Calu3 (cell line): ENCODE measurements at regions of chr5 and their contacts with region 1.

Region 1: DNA sequence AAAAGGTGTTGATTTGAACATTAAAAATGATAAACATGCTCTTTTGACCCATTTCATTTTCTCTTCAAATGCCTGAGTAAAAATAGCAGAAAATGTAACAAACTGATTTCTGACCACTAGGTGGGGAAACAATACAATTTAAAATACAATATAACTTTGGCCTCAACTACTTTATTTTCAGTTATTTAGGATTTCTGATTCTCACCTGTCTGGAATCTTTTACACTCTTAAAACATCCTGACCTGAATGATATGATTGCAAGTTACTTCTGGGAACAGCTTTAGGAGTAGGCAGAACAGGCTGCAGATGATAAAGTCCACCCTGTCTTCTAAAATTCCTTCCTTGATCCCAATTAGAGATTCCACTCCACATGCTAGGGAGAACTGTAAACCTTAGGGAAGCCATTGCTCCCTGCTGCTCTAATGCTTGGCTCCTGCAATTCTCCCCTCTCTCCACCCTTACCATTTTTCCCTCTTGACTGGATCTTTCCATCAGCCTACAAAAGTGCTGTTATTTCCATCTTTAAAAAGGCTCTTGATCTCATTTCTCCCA is 70.3 kb downstream of the FYB1 start:
- DNase-seq: no peak
- H3K4me3 Mint-ChIP-seq: no peak overlapping the region
- H3K27ac Mint-ChIP-seq: peak overlapping the region; percentile 76
- H3K4me1 Mint-ChIP-seq: peaks cover 12% of the 10 kb centered on the region
- H3K27me3 Mint-ChIP-seq: no peaks in the 10 kb centered on the region
- CTCF ChIP-seq: no peak

Region 2: GRCh38 chr5:39194466-39195136 is 45.5 kb after region 1 on chr5:
- CTCF ChIA-PET with region 1: no interaction called
- intact Hi-C with region 1: loop called (anchors 5 kb)
- DNase-seq: no peak
- H3K4me3 Mint-ChIP-seq: no peak overlapping the region
- H3K27ac Mint-ChIP-seq: no peak overlapping the region
- H3K4me1 Mint-ChIP-seq: peaks cover 59% of the 10 kb centered on the region
- H3K27me3 Mint-ChIP-seq: no peaks in the 10 kb centered on the region
- CTCF ChIP-seq: no peak

Region 3: DNA sequence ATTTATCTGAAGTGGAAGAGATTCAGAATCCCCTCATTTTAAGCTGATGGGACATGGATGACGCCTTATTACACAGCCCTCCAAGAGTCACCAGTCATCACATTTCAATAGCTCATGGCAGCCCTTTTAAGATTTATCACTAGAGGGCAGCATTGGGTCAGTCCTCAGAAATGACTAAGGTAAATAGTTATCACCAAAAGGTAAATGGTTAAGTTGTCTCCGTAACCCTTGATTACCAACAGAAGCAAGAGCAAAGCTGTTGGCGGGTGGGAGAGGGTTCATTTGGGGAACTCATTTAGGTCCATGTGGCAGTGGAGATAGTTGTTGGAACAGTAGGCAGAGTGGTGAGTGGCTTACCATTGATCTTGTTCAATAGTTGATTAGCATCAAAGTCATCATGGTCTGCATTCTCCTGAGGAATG is 227.2 kb after region 1 on chr5:
- CTCF ChIA-PET with region 1: interaction called, 6 read pairs
- intact Hi-C with region 1: loop called (anchors 2 kb)
- DNase-seq: peak; percentile 64
- H3K4me3 Mint-ChIP-seq: no peak overlapping the region
- H3K27ac Mint-ChIP-seq: no peak overlapping the region
- H3K4me1 Mint-ChIP-seq: peaks cover 39% of the 10 kb centered on the region
- H3K27me3 Mint-ChIP-seq: no peaks in the 10 kb centered on the region
- CTCF ChIP-seq: peak; percentile 73

Region 4: GRCh38 chr5:39547553-39548154 is 398.6 kb after region 1 on chr5:
- CTCF ChIA-PET with region 1: no interaction called
- intact Hi-C with region 1: loop called (anchors 10 kb)
- DNase-seq: peak; percentile 49
- H3K4me3 Mint-ChIP-seq: no peak overlapping the region
- H3K27ac Mint-ChIP-seq: no peak overlapping the region
- H3K4me1 Mint-ChIP-seq: peaks cover 10% of the 10 kb centered on the region
- H3K27me3 Mint-ChIP-seq: no peaks in the 10 kb centered on the region
- CTCF ChIP-seq: peak; percentile 59

Region 5: DNA sequence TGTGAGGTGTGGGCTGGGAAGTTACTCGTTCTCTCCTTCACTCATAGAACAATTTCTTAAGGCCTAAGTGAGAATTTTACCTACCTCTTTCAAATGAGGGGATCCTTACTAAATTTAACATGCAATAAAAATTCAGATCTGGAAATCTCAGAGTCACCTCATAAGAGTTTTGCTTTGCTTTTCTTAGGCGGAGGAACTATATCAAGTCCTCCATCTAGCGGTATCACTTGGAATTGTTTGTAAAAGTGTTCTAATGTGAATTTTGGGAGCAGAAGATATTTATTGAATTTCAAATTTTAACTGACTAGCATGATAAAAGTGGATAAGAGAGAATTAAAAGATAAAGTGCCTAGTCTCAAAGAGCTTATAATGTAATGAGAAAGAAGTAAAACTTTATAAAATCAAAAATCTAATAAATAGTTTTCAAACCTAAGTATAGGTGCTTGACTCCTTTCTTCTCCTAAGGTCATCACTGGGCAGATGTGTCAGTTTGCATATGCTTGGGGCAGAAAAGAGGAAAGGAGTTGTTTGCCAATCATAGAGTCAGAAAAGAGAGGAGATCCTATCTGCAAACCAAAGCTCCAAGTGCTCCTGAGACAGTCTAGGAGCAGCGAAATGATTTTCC is 421.5 kb after region 1 on chr5:
- CTCF ChIA-PET with region 1: no interaction called
- intact Hi-C with region 1: loop called (anchors 2 kb)
- DNase-seq: peak; percentile 10
- H3K4me3 Mint-ChIP-seq: no peak overlapping the region
- H3K27ac Mint-ChIP-seq: no peak overlapping the region
- H3K4me1 Mint-ChIP-seq: no peaks in the 10 kb centered on the region
- H3K27me3 Mint-ChIP-seq: no peaks in the 10 kb centered on the region
- CTCF ChIP-seq: peak; percentile 16